ENCODE measurements at regions of chr6 and their contacts with region 1.

Region 1: GRCh38 chr6:100464903-100465700 is at the start of gene SIM1:
- DNase-seq: no peak
- H3K4me3 Mint-ChIP-seq: peak within 1 kb of the TSS; percentile 18
- H3K27ac Mint-ChIP-seq: no peak within 1 kb of the TSS
- H3K4me1 Mint-ChIP-seq: peaks cover 34% of the 10 kb centered on the region
- H3K27me3 Mint-ChIP-seq: peaks cover 83% of the 10 kb centered on the region
- total RNA-seq, gene SIM1: not detected

Region 2: DNA sequence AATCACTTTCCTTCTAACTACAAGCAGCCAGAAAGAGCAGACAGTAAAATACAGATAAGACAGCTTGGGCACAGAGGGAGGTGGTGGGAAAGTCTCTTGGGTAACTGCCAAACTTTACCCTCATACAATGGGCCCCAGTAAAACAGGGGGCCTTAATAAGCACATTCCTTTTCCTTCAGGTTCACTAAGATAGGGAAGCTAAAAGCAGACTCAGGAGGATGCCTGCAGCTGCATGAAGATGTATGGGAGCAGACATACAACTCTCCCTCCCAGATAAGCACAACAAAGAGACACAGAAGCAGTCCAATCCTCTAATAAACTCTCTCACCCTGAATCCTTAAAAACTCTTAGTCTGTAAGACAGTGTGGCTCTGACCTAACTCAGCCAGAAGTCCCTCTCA is 49.3 kb before region 1 on chr6:
- CTCF ChIA-PET with region 1: no interaction called
- intact Hi-C with region 1: no loop called
- DNase-seq: no peak
- H3K4me3 Mint-ChIP-seq: no peak overlapping the region
- H3K27ac Mint-ChIP-seq: no peak overlapping the region
- H3K4me1 Mint-ChIP-seq: no peaks in the 10 kb centered on the region
- H3K27me3 Mint-ChIP-seq: peaks cover 6% of the 10 kb centered on the region

Region 3: GRCh38 chr6:100446115-100447080 is 18.7 kb before region 1 on chr6:
- CTCF ChIA-PET with region 1: interaction called, 3 read pairs
- intact Hi-C with region 1: loop called (anchors 1 kb)
- DNase-seq: no peak
- H3K4me3 Mint-ChIP-seq: no peak overlapping the region
- H3K27ac Mint-ChIP-seq: no peak overlapping the region
- H3K4me1 Mint-ChIP-seq: peaks cover 6% of the 10 kb centered on the region
- H3K27me3 Mint-ChIP-seq: peaks cover 60% of the 10 kb centered on the region

Region 4: DNA sequence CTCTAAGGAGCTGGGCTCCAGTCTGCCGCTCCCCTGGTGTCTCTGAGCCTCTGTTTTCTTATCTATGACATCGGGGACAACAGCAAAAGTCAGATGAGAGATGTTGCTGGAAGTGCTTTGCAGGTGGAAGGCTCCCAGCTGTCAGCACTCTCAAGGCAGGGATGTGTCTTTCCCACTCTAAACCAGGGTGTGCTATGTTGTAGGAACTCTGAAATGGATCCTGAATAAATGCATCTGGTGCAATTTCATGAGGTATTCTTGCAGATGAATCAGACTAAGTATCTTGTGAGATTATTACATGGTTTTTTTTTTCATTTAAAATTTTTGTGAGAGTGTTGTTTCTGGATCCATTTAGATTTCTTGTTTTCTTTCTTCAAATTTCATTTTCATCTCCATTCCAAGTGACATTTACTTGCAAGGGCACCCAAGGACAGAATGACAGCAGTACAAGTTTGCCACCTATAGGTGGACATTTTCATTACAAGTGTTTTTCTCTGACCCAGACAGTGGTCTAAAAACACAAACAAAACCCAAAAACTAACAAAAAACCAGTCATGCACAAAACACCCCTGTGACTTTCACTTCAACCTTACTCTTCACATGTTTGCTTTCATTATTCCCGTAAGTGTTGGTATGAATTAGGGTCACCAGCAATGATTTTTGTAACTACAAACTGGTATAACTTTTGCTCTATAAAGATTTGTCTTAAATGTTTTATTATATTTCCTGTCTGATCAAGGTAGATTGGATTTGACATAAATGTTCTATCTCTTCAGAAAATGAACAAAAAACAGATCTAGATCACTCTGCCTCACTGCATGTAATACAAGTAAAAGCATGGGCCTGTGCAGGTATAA is 14.3 kb after region 1 on chr6:
- CTCF ChIA-PET with region 1: no interaction called
- intact Hi-C with region 1: no loop called
- DNase-seq: no peak
- H3K4me3 Mint-ChIP-seq: no peak overlapping the region
- H3K27ac Mint-ChIP-seq: no peak overlapping the region
- H3K4me1 Mint-ChIP-seq: no peaks in the 10 kb centered on the region
- H3K27me3 Mint-ChIP-seq: peaks cover 15% of the 10 kb centered on the region

Region 5: GRCh38 chr6:101396548-101397173 is 931.6 kb after region 1 on chr6:
- CTCF ChIA-PET with region 1: no interaction called
- intact Hi-C with region 1: loop called (anchors 5 kb)
- DNase-seq: peak; percentile 70
- H3K4me3 Mint-ChIP-seq: no peak overlapping the region
- H3K27ac Mint-ChIP-seq: no peak overlapping the region
- H3K4me1 Mint-ChIP-seq: peaks cover 3% of the 10 kb centered on the region
- H3K27me3 Mint-ChIP-seq: peaks cover 69% of the 10 kb centered on the region

Measured in activated naive CD4-positive, alpha-beta T cell treated with anti-CD3 and anti-CD28 coated beads for 36 hours (primary cell).